ENCODE measurements at regions of chr17 and their contacts with region 1.

Region 1: DNA sequence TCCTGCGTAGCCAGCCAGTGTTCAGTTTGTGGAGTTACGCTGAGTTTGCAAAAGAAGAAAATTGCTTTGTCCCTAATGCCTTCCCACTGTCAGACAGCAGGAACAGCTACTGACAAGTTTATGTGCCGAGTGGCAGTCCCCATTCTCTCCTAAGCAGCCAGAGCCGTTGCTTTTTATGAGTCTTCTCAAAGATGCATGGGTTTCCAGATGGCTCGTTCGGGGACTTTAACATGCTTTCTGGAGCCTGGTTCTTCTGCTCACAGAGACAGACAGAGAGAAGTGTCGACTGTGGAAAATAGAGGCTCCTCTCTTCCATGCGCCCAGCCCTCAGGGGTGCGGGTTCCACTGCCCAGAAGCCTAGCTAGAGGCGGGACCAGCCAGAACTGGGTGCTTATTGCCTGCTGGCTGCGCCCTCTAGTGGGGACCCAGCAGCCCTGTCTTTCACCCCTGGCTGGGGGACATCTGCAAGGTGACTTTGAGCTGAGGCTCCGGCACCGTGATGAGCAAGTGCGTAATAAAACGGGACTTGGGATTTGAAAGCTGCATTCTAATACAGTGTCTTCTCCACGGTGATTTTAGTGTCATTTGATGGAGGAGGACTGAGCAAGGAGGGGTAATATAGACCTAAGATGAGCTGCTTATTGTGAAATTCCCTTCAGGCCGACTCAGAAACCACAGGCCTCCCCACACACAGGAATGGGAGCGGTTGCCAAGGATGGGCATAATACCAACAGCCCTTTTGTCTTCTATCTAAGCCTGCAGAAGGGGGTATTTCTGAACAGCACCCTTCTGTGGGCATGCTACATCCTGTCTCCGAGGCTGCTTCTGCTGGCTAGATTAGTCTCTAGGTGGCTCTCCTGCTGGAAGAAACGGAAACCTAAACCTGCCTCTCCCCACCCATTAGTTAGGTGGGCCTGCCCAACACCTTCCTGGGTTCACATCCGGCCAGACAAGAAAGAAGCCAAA is 73.1 kb downstream of the CCDC182 start:
- DNase-seq: peak; percentile 63 to 81
- H3K4me3 ChIP-seq: no peak overlapping the region
- H3K27ac ChIP-seq: no peak overlapping the region
- H3K4me1 ChIP-seq: peaks cover 0 to 7% (median 3%) of the 10 kb centered on the region in 4 donors
- H3K27me3 ChIP-seq: no peaks in the 10 kb centered on the region
- CTCF ChIP-seq: peak; percentile 86 to 93

Region 2: DNA sequence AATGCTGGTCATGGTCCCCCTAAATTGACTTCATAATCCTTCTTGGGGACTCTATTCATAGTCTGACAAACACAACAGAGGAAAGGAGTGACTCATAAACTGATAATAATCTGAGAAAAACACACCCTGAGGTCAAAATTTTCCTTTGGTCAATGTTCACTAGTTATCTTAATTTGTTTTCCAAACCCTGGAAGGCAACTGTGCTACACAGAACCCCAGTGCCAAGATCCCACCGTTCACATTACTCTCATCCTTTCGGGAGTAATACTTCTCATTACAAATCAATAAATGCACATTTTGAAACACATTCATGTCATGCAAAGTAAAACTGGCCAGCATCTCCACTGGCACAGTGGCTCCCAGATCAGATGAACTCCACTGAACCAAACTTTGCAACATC is 734.3 kb before region 1 on chr17:
- intact Hi-C with region 1: no loop called
- DNase-seq: no peak
- H3K4me3 ChIP-seq: no peak overlapping the region
- H3K27ac ChIP-seq: no peak overlapping the region
- H3K4me1 ChIP-seq: no peaks in the 10 kb centered on the region
- H3K27me3 ChIP-seq: no peaks in the 10 kb centered on the region
- CTCF ChIP-seq: no peak

Region 3: GRCh38 chr17:57284984-57285646 is 386.8 kb before region 1 on chr17:
- intact Hi-C with region 1: no loop called
- DNase-seq: no peak
- H3K4me3 ChIP-seq: no peak overlapping the region
- H3K27ac ChIP-seq: no peak overlapping the region
- H3K4me1 ChIP-seq: peaks cover 0 to 12% (median 0%) of the 10 kb centered on the region in 4 donors
- H3K27me3 ChIP-seq: no peaks in the 10 kb centered on the region
- CTCF ChIP-seq: no peak

Region 4: GRCh38 chr17:57357399-57357807 is 314.5 kb before region 1 on chr17:
- intact Hi-C with region 1: no loop called
- DNase-seq: no peak
- H3K4me3 ChIP-seq: no peak overlapping the region
- H3K27ac ChIP-seq: no peak overlapping the region
- H3K4me1 ChIP-seq: peaks cover 0 to 9% (median 0%) of the 10 kb centered on the region in 4 donors
- H3K27me3 ChIP-seq: no peaks in the 10 kb centered on the region
- CTCF ChIP-seq: no peak

Region 5: DNA sequence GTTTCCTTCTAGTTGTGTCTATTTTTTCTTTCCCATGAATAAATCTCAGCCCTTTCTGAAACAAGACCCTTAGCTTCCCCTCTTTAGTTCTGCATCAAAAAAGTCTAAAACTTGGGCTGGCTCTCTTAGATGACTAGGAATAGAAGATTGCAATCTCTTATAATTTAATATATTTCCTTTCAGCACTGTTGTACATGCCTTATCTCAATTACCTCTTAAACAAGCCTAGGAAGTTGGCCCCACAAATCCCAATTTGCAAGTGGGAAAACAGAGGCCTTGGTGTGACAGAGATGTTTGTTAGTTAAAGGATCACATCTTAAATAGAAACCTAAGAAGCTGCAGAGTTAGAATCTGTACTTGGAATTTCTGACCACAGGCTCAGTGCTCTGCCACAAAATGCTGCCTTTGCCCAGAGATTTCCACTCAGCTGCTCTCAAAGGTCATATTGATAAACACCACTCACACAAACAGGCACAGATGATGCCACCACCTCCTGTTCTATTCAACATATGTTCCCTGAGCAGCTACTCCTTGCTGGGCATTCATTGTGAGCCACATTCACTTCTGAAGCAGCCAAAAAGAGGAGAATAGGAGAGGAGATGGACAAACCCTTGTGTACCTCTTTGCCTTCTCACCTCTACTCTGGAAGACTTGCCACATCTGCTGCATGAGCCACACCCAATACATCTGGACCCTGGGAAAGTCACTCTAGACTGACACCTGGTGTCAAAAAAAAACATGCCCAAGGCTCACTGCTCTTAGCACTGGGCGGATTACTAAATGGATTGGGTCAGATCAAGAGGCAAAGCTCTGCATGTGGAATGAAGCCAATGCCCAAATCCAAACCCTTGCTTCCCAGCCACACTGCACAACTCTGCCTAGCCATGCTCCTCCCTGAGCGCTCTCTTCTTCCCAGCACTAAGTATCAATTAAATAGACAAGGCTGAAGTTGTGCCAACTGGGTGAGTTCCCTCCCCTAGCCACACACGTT is 67.7 kb after region 1 on chr17:
- intact Hi-C with region 1: no loop called
- DNase-seq: no peak
- H3K4me3 ChIP-seq: no peak overlapping the region
- H3K27ac ChIP-seq: no peak overlapping the region
- H3K4me1 ChIP-seq: no peaks in the 10 kb centered on the region
- H3K27me3 ChIP-seq: peaks cover 0 to 26% of the 10 kb centered on the region in 2 donors
- CTCF ChIP-seq: no peak

Region 6: GRCh38 chr17:57803025-57803424 is 131.1 kb after region 1 on chr17:
- intact Hi-C with region 1: loop called (anchors 10 kb)
- DNase-seq: no peak
- H3K4me3 ChIP-seq: no peak overlapping the region
- H3K27ac ChIP-seq: no peak overlapping the region
- H3K4me1 ChIP-seq: no peaks in the 10 kb centered on the region
- H3K27me3 ChIP-seq: no peaks in the 10 kb centered on the region
- CTCF ChIP-seq: no peak

Region 7: GRCh38 chr17:57833179-57833939 is 161.4 kb after region 1 on chr17:
- intact Hi-C with region 1: loop called (anchors 10 kb)
- DNase-seq: peak; percentile 70 to 87
- H3K4me3 ChIP-seq: peak overlapping the region; percentile 40 to 56
- H3K27ac ChIP-seq: peak overlapping the region; percentile 78 to 83
- H3K4me1 ChIP-seq: peaks cover 0 to 28% (median 17%) of the 10 kb centered on the region in 4 donors
- H3K27me3 ChIP-seq: no peaks in the 10 kb centered on the region
- CTCF ChIP-seq: peak; percentile 89 to 91